Naive thymus-derived CD4-positive, alpha-beta T cell (primary cell): ENCODE measurements at regions of chr11 and their contacts with region 1.

Region 1: DNA sequence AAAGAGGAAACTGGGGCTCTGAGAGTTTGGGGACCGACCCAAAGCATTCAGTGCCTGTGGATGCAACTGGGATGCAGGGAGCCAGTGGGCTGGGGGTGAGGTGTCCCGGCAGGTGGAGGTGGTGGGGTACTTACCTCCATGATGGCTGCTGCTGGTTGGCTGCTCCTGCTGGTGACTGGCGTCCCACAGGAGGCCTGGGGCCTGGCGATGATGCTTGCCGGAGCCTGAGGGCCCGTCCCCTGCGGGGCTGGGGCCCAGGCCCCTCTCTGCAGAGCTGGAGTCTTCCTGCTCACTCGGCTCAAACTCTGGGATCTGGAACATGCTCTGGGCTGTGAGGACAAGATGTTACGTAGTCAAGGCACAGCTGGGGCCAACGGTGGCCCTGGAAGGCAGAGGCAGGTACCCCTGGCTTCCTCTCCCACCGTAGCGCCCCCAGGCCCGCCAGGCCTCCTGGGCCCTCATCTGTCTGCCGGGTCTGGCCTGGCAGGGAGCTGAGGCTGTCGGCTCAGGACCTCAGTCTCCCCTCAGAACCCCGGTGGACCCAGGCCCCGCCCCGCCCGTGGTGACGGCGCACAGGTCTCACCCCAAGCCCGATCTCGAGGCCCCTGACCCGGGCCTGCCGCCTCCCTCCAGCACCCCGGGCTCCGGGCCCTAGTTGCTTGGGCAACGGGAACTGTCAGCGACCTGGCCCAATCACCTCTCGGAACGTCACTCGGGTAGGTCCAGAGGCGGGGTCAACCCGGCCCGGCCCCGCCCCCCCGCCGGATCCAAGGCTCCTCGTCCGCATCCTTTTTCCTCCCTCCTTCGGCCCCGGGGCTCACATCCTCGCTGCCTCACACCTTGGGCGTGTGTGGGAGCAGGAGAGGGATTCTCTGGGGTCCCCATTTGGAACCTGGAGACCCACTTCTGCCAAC is at the start of gene BAD:
- DNase-seq: peak; percentile 77 to 92 (median 87)
- ATAC-seq: peak; percentile 87
- H3K4me3 ChIP-seq: peak within 1 kb of the TSS; percentile 100
- H3K4me3 Mint-ChIP-seq: peak within 1 kb of the TSS; percentile 84 to 93 (median 89)
- H3K27ac ChIP-seq: peak within 1 kb of the TSS; percentile 99
- H3K27ac Mint-ChIP-seq: peak within 1 kb of the TSS; percentile 81 to 98 (median 95)
- H3K4me1 ChIP-seq: peaks cover 11 to 17% of the 10 kb centered on the region in 2 donors
- H3K4me1 Mint-ChIP-seq: peaks cover 8 to 25% (median 18%) of the 10 kb centered on the region in 7 donors
- H3K27me3 ChIP-seq: no peaks in the 10 kb centered on the region
- H3K27me3 Mint-ChIP-seq: no peaks in the 10 kb centered on the region
- total RNA-seq, gene BAD: 17.5 to 41.1 (median 22.7) TPM

Region 2: GRCh38 chr11:64185816-64186498 is 98.3 kb before region 1 on chr11 and contains the start of gene STIP1:
- CTCF ChIA-PET with region 1: no interaction called
- POLR2A ChIA-PET with region 1: no interaction called
- intact Hi-C with region 1: loop called (anchors 1 kb)
- DNase-seq: peak; percentile 87 to 100 (median 99)
- ATAC-seq: peak; percentile 92
- H3K4me3 ChIP-seq: peak within 1 kb of the TSS; percentile 84
- H3K4me3 Mint-ChIP-seq: peak within 1 kb of the TSS in 9 of 10 donors; percentile 88 to 99 (median 96)
- H3K27ac ChIP-seq: peak within 1 kb of the TSS; percentile 82
- H3K27ac Mint-ChIP-seq: peak within 1 kb of the TSS in 7 of 9 donors; percentile 89 to 99 (median 92)
- H3K4me1 ChIP-seq: peaks cover 11 to 28% of the 10 kb centered on the region in 2 donors
- H3K4me1 Mint-ChIP-seq: peaks cover 19 to 58% (median 46%) of the 10 kb centered on the region in 7 donors
- H3K27me3 ChIP-seq: no peaks in the 10 kb centered on the region
- H3K27me3 Mint-ChIP-seq: peaks cover 0 to 6% (median 0%) of the 10 kb centered on the region in 5 donors
- total RNA-seq, gene STIP1: 45.1 to 243 (median 88.8) TPM

Region 3: DNA sequence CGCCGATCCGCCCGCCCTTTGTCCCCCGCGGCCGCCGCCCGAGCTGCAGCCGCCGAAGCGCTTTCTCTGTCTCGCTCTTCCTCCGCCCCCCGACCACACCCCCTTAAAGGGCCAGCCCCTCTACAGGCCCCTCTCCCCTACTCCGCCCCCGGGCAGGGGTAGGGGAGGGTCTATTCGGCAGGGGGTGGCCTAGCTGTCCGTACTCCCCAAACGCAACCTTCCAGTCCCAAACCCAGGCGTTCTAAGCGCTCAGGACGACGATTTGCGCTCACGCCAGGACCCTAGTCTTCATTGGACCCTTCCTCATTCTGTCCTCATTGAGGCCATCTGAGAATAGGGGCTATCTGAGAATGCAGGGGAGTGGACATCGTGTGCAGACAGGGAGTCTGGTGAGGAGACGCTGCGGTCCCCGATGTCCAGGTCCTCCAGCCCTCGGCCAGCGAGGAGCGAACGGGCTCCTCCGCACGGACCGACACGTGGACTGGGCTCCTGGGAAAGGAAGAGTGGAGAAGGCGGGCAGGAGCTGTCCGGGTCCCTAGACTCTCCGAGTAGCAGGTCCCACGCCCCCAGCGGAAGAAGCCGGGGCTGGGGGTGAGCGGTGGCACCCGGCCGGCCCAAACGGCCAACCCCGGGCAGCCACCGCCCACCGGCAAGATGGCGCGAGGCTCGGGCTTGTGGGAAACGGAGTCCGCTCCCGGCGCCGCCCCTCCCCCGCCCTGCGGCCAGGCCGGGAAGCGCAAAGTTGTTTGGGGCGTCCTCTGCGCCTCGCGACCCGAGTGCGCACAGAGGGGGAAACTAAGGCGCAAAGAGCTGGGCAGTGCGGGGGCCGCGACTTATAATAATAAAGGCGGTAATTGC is 37.2 kb before region 1 on chr11 and contains the start of gene PPP1R14B:
- CTCF ChIA-PET with region 1: no interaction called
- POLR2A ChIA-PET with region 1: interaction called, 14 read pairs
- intact Hi-C with region 1: loop called (anchors 1 kb)
- DNase-seq: peak; percentile 55 to 88 (median 70)
- ATAC-seq: peak; percentile 75
- H3K4me3 ChIP-seq: peak within 1 kb of the TSS; percentile 100
- H3K4me3 Mint-ChIP-seq: peak within 1 kb of the TSS; percentile 83 to 93 (median 88)
- H3K27ac ChIP-seq: peak within 1 kb of the TSS; percentile 64
- H3K27ac Mint-ChIP-seq: peak within 1 kb of the TSS; percentile 65 to 88 (median 85)
- H3K4me1 ChIP-seq: peaks cover 25 to 27% of the 10 kb centered on the region in 2 donors
- H3K4me1 Mint-ChIP-seq: peaks cover 7 to 46% (median 32%) of the 10 kb centered on the region in 7 donors
- H3K27me3 ChIP-seq: no peaks in the 10 kb centered on the region
- H3K27me3 Mint-ChIP-seq: peaks cover 0 to 3% (median 0%) of the 10 kb centered on the region in 5 donors
- total RNA-seq, gene PPP1R14B: 20.1 to 116 (median 26.0) TPM

Region 4: DNA sequence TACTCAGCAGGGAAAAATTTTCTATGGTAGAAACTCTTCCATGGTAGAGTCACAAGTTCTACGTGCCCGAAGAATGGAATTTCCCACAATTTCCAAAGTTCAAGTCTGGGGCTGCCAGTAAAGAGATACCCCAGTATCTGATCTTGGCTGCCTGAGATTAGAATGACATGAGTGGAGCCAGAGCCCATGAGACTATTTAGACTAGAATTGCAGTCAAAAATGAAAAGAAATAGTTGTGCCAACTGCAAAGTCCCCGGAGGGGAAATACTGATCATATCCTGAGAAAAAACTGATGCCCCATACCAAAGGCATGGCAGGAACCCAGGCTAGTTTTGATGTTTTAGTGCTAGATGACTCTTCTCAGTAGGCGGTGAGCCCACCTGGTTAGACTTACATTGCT is 676.4 kb after region 1 on chr11:
- CTCF ChIA-PET with region 1: no interaction called
- POLR2A ChIA-PET with region 1: no interaction called
- intact Hi-C with region 1: no loop called
- DNase-seq: no peak
- ATAC-seq: no peak
- H3K4me3 ChIP-seq: no peak overlapping the region
- H3K4me3 Mint-ChIP-seq: no peak overlapping the region
- H3K27ac ChIP-seq: no peak overlapping the region
- H3K27ac Mint-ChIP-seq: no peak overlapping the region
- H3K4me1 ChIP-seq: no peaks in the 10 kb centered on the region
- H3K4me1 Mint-ChIP-seq: peaks cover 0 to 3% (median 0%) of the 10 kb centered on the region in 7 donors
- H3K27me3 ChIP-seq: peaks cover 0 to 2% of the 10 kb centered on the region in 2 donors
- H3K27me3 Mint-ChIP-seq: peaks cover 0 to 11% (median 6%) of the 10 kb centered on the region in 5 donors